H1 (cell line): ENCODE measurements at regions of chr2 and their contacts with region 1.

Region 1: DNA sequence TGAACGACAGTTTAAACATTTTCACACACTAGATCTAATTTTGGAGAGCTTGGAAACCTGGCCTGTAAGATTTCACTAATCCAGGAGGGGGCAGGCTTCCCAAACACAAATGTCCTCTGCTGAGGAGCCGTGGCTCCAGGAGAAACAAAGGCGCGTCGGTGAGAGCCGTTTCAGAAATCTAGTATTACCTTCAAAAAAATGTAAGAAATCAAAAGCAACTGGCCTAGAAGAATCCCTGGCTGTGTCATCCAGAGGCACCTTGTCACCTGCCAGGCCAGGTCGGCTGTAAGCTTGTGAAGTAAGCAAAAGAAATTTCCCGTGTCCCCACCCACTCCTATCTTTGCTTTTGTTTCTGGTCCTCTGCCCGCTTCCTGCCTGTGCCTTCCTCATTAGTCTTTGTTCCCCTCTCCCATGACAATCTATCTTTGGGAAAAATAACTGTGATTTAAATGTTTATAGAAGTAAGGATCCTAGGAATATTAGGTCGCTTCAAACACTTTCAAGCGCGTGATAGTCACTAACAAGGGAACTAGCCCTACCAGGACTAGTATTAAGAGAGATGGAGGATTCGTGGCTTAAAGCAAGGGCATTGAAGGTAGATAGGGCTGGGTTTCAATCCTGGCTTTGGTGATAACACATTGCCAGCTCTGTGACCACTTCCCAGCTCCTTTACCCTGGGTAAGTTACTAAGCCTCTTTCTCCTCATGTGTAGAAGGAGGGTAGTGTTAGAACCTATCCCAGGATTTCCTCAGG is 99.5 kb upstream of the STK39 start:
- DNase-seq: peak; percentile 33 to 83
- H3K4me3 ChIP-seq: peak overlapping the region; percentile 28 to 57 (median 39); a peak in 6 of 8 replicates
- H3K27ac ChIP-seq: no peak overlapping the region; the same call in 1 of the 2 replicates
- H3K4me1 ChIP-seq: peaks cover 0 to 6% (median 1%) of the 10 kb centered on the region in 4 experiments; a peak in 3 of 7 replicates
- H3K27me3 ChIP-seq: no peaks in the 10 kb centered on the region
- CTCF ChIP-seq: peak; percentile 20 to 75 (median 67)
- EP300 ChIP-seq: no peak
- POLR2A ChIP-seq: 0 out of 3 replicates have a peak, but pooled peaks of 1 of the 2 experiments have one; percentile 26
- RAD21 ChIP-seq: peak; percentile 93

Region 2: GRCh38 chr2:168194784-168195522 is 151.9 kb before region 1 on chr2:
- CTCF ChIA-PET with region 1: no interaction called
- POLR2A ChIA-PET with region 1: no interaction called
- DNase-seq: no peak
- H3K4me3 ChIP-seq: no peak overlapping the region
- H3K27ac ChIP-seq: no peak overlapping the region
- H3K4me1 ChIP-seq: peaks cover 0 to 10% (median 3%) of the 10 kb centered on the region in 4 experiments; a peak in 2 of 7 replicates
- H3K27me3 ChIP-seq: no peaks in the 10 kb centered on the region
- CTCF ChIP-seq: no peak
- EP300 ChIP-seq: no peak
- POLR2A ChIP-seq: no peak
- RAD21 ChIP-seq: no peak

Region 3: GRCh38 chr2:168220965-168221819 is 125.7 kb before region 1 on chr2:
- CTCF ChIA-PET with region 1: no interaction called
- POLR2A ChIA-PET with region 1: no interaction called
- DNase-seq: no peak
- H3K4me3 ChIP-seq: no peak overlapping the region
- H3K27ac ChIP-seq: no peak overlapping the region
- H3K4me1 ChIP-seq: peaks cover 0 to 3% (median 0%) of the 10 kb centered on the region in 4 experiments; a peak in 1 of 7 replicates
- H3K27me3 ChIP-seq: no peaks in the 10 kb centered on the region
- CTCF ChIP-seq: no peak
- EP300 ChIP-seq: no peak
- POLR2A ChIP-seq: no peak
- RAD21 ChIP-seq: no peak

Region 4: GRCh38 chr2:168357797-168358472 is 11.0 kb after region 1 on chr2:
- CTCF ChIA-PET with region 1: interaction called, 10 read pairs
- POLR2A ChIA-PET with region 1: interaction called, 3 read pairs
- DNase-seq: no peak
- H3K4me3 ChIP-seq: no peak overlapping the region
- H3K27ac ChIP-seq: no peak overlapping the region
- H3K4me1 ChIP-seq: peaks cover 0 to 10% (median 2%) of the 10 kb centered on the region in 4 experiments; a peak in 4 of 7 replicates
- H3K27me3 ChIP-seq: no peaks in the 10 kb centered on the region
- CTCF ChIP-seq: no peak
- EP300 ChIP-seq: no peak
- POLR2A ChIP-seq: no peak
- RAD21 ChIP-seq: no peak

Region 5: GRCh38 chr2:168705534-168706470 is 358.9 kb after region 1 on chr2:
- CTCF ChIA-PET with region 1: interaction called, 40 read pairs
- POLR2A ChIA-PET with region 1: no interaction called
- DNase-seq: no peak
- H3K4me3 ChIP-seq: no peak overlapping the region
- H3K27ac ChIP-seq: no peak overlapping the region
- H3K4me1 ChIP-seq: 0 out of 7 replicates have a peak, but pooled peaks cover 0 to 1% (median 0%) of the 10 kb centered on the region in 4 experiments
- H3K27me3 ChIP-seq: no peaks in the 10 kb centered on the region
- CTCF ChIP-seq: peak in 2 of 3 experiments; percentile 23 to 39; a peak in 2 of 4 replicates
- EP300 ChIP-seq: no peak
- POLR2A ChIP-seq: no peak
- RAD21 ChIP-seq: peak; percentile 51 to 62

Region 6: DNA sequence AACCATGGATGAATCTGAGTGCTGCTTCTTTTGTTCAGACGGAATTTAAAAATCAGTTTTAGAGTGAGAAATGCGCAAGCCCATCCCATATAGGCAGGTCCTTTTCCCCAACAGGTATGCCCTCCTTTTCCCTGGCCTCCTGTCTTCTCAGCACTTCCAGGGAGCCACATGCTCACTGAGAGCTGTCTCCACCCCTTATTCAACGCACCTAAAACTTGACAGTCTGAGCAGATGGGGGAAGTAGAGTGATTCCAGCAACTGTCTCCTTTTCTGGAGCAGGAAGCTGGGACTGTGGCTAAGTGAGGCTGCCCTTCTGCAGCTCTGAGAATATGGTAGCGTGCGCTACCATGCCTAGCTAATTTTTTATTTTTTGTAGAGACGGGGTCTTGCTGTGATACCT is 402.4 kb after region 1 on chr2:
- CTCF ChIA-PET with region 1: interaction called, 12 read pairs
- POLR2A ChIA-PET with region 1: no interaction called
- DNase-seq: no peak
- H3K4me3 ChIP-seq: no peak overlapping the region
- H3K27ac ChIP-seq: no peak overlapping the region
- H3K4me1 ChIP-seq: peaks cover 0 to 5% (median 3%) of the 10 kb centered on the region in 4 experiments; a peak in 3 of 7 replicates
- H3K27me3 ChIP-seq: no peaks in the 10 kb centered on the region
- CTCF ChIP-seq: no peak
- EP300 ChIP-seq: no peak
- POLR2A ChIP-seq: no peak
- RAD21 ChIP-seq: no peak